H1 (cell line): ENCODE measurements at regions of chr10 and their contacts with region 1.

Region 1: GRCh38 chr10:50788951-50789945 is 49.5 kb downstream of the ASAH2B start:
- DNase-seq: no peak
- H3K4me3 ChIP-seq: no peak overlapping the region
- H3K27ac ChIP-seq: no peak overlapping the region
- H3K4me1 ChIP-seq: peaks cover 0 to 9% (median 4%) of the 10 kb centered on the region in 4 experiments; a peak in 3 of 7 replicates
- H3K27me3 ChIP-seq: no peaks in the 10 kb centered on the region
- CTCF ChIP-seq: peak in 2 of 3 experiments; percentile 53 to 56; a peak in 3 of 4 replicates
- EP300 ChIP-seq: no peak
- POLR2A ChIP-seq: no peak
- RAD21 ChIP-seq: peak; percentile 81 to 87

Region 2: GRCh38 chr10:50805981-50806622 is 16.9 kb after region 1 on chr10:
- CTCF ChIA-PET with region 1: interaction called, 14 read pairs
- POLR2A ChIA-PET with region 1: no interaction called
- DNase-seq: no peak
- H3K4me3 ChIP-seq: no peak overlapping the region
- H3K27ac ChIP-seq: no peak overlapping the region
- H3K4me1 ChIP-seq: peaks cover 0 to 7% (median 4%) of the 10 kb centered on the region in 4 experiments; a peak in 3 of 7 replicates
- H3K27me3 ChIP-seq: no peaks in the 10 kb centered on the region
- CTCF ChIP-seq: no peak
- EP300 ChIP-seq: no peak
- POLR2A ChIP-seq: no peak
- RAD21 ChIP-seq: no peak

Region 3: DNA sequence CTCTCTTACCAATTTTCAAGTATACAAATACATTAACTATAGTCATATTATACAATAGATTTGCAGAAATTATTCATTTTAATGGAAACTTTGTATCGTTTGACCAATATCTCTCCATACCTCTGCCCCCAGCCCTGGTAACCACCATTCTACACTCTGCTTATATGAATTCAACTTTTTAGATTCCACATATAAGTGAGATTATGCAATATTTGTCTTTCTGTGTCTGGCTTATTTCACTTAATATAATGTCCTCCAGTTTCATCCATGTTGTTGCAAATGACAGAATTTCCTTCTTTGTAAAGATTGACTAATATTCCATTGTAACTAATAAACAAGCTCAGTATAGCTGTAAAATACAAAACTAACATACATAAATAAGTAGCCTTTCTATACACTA is 40.8 kb after region 1 on chr10:
- CTCF ChIA-PET with region 1: no interaction called
- POLR2A ChIA-PET with region 1: no interaction called
- DNase-seq: no peak
- H3K4me3 ChIP-seq: no peak overlapping the region
- H3K27ac ChIP-seq: no peak overlapping the region
- H3K4me1 ChIP-seq: no peaks in the 10 kb centered on the region
- H3K27me3 ChIP-seq: no peaks in the 10 kb centered on the region
- CTCF ChIP-seq: no peak
- EP300 ChIP-seq: no peak
- POLR2A ChIP-seq: no peak
- RAD21 ChIP-seq: no peak

Region 4: DNA sequence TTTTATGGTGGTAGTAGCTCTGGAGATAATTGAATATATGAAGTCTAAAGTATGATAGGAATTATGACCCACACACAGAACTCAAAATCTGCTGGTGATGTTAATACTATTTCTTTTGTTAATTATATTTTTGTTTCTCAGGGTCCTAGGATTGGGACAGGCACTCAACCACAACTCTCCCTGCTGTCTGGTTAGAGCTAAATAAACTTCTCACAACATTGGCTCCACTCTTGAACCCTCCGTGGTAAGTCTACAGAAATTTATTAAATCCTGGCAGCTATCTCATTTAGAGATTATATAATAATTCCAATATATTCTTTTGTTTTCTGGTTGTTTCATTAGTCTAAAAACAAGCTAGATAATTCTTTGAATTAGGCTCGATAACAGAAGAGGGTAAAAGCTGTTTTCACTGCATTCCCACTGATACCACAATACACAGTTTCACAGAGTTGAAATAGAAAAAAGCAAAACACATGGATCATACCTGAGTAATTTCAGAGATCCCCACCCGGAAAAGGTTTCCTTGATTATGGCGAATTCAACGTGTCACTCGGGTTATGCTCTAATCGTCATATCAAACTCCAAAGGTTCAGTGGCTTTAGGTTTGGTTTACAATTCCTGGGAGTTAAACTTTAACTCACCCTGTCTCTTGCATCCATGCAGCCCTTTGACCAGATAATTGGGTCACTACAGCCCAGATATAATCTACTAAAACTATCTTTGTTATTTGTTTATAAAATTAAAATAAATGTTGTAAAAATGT is 96.0 kb after region 1 on chr10 and contains the start of gene A1CF:
- CTCF ChIA-PET with region 1: interaction called, 11 read pairs
- POLR2A ChIA-PET with region 1: no interaction called
- DNase-seq: no peak
- H3K4me3 ChIP-seq: no peak within 1 kb of the TSS
- H3K27ac ChIP-seq: no peak within 1 kb of the TSS
- H3K4me1 ChIP-seq: no peaks in the 10 kb centered on the region
- H3K27me3 ChIP-seq: no peaks in the 10 kb centered on the region
- CTCF ChIP-seq: no peak
- EP300 ChIP-seq: no peak
- POLR2A ChIP-seq: no peak
- RAD21 ChIP-seq: no peak
- total RNA-seq, gene A1CF: not detected in 2 replicates

Region 5: DNA sequence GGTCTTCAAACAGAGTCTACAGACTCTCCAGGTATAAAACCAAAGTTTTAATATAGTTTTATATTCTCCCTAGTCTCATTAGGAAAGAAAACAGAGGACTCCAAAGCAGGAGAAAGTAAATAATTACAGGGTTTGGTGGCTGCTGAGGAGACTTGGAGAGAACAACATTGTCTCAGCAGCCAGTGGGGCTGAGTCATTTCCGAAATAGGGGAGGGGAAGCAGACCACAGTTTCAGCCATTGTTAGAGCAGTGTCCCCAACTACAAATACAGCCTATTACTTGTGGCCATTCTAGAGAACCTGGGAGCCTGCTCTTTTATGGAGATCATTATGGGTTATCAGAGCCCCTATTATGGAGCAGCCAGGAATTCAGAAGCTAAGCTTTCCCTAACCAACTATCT is 140.4 kb after region 1 on chr10:
- CTCF ChIA-PET with region 1: no interaction called
- POLR2A ChIA-PET with region 1: no interaction called
- DNase-seq: no peak
- H3K4me3 ChIP-seq: no peak overlapping the region
- H3K27ac ChIP-seq: no peak overlapping the region
- H3K4me1 ChIP-seq: no peaks in the 10 kb centered on the region
- H3K27me3 ChIP-seq: no peaks in the 10 kb centered on the region
- CTCF ChIP-seq: no peak
- EP300 ChIP-seq: no peak
- POLR2A ChIP-seq: no peak
- RAD21 ChIP-seq: no peak

Region 6: DNA sequence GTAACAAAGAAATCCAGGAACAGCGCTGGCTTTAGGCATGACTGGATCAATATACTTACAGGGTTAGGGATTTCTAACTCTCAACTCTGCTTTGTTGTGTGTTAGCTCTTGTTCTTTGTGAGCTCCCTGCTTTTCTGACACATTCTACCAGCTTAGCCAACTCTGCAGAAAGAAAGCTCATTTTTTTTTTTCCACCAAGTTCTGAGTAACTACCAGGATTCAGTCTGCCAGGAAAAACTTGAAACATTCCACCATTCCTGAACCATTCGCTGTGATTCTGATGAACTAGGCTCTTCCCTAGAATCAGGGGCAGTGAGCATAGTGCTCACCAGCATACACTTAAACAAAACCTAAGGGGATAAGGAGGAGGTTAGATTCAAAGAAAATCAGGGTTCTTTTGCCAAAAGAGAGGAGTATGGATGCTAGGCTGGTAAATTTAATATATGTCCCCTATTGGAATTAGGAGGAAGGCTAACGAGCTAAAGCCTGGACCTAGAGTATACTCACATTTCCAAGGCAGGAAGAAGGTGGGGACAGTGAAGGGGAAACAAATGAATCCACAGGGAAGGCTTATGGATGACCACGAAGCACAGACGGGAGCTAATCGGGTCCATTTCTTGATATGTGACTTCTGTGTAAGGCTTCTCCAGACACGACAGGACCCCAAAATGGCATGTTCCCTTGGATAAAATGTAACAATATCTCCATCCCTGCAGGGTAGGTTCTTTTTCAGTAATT is 468.4 kb after region 1 on chr10:
- CTCF ChIA-PET with region 1: no interaction called
- POLR2A ChIA-PET with region 1: no interaction called
- DNase-seq: no peak
- H3K4me3 ChIP-seq: no peak overlapping the region
- H3K27ac ChIP-seq: no peak overlapping the region
- H3K4me1 ChIP-seq: peaks cover 4 to 9% (median 7%) of the 10 kb centered on the region in 4 experiments; a peak in 3 of 7 replicates
- H3K27me3 ChIP-seq: no peaks in the 10 kb centered on the region; a peak in 1 of 7 replicates
- CTCF ChIP-seq: no peak
- EP300 ChIP-seq: no peak
- POLR2A ChIP-seq: no peak
- RAD21 ChIP-seq: no peak